ENCODE measurements at regions of chr5 and their contacts with region 1.

Region 1: GRCh38 chr5:160439205-160439600 is 17.5 kb downstream of the PTTG1 start:
- DNase-seq: peak; percentile 94
- H3K4me3 Mint-ChIP-seq: peak overlapping the region; percentile 84
- H3K27ac Mint-ChIP-seq: peak overlapping the region; percentile 94
- H3K4me1 Mint-ChIP-seq: peaks cover 17% of the 10 kb centered on the region
- H3K27me3 Mint-ChIP-seq: peaks cover 2% of the 10 kb centered on the region

Region 2: DNA sequence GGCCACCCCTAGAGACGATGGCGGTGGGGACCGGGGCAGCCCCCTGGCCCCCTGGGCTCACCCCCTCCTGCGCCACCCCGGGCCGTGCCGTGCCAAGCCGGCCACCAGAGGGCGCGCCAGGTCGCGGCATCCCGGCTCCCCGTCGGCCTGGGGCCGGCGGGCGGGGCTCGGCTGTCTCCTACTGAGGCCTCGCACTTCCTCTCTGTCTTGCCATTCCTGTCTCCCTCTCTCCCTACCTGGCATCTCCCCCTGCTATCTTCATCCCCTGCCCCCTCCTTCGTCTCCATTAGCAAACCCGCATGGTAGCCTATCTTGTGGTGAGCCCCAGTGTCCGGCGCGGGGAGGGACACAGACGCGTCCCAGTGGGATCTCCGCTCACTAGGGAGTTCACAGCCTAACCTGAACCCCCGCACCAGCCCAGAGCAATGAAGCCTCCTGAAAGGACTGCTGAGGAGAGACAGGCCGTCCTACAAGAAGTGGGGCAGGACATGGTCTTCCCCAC is 239.7 kb before region 1 on chr5:
- CTCF ChIA-PET with region 1: no interaction called
- intact Hi-C with region 1: no loop called
- DNase-seq: peak; percentile 68
- H3K4me3 Mint-ChIP-seq: peak overlapping the region; percentile 65
- H3K27ac Mint-ChIP-seq: no peak overlapping the region
- H3K4me1 Mint-ChIP-seq: peaks cover 2% of the 10 kb centered on the region
- H3K27me3 Mint-ChIP-seq: peaks cover 9% of the 10 kb centered on the region

Region 3: GRCh38 chr5:160418561-160419457 is 20.4 kb before region 1 on chr5 and contains the start of gene SLU7:
- CTCF ChIA-PET with region 1: interaction called, 61 read pairs
- intact Hi-C with region 1: loop called (anchors 1 kb)
- DNase-seq: peak; percentile 96
- H3K4me3 Mint-ChIP-seq: peak within 1 kb of the TSS; percentile 97
- H3K27ac Mint-ChIP-seq: peak within 1 kb of the TSS; percentile 94
- H3K4me1 Mint-ChIP-seq: peaks cover 43% of the 10 kb centered on the region
- H3K27me3 Mint-ChIP-seq: no peaks in the 10 kb centered on the region
- total RNA-seq, gene SLU7: 33.2 to 34.3 TPM

Region 4: GRCh38 chr5:160458806-160459800 is 19.9 kb after region 1 on chr5:
- CTCF ChIA-PET with region 1: interaction called, 74 read pairs
- intact Hi-C with region 1: loop called (anchors 1 kb)
- DNase-seq: no peak
- H3K4me3 Mint-ChIP-seq: no peak overlapping the region
- H3K27ac Mint-ChIP-seq: no peak overlapping the region
- H3K4me1 Mint-ChIP-seq: peaks cover 20% of the 10 kb centered on the region
- H3K27me3 Mint-ChIP-seq: peaks cover 3% of the 10 kb centered on the region

Region 5: DNA sequence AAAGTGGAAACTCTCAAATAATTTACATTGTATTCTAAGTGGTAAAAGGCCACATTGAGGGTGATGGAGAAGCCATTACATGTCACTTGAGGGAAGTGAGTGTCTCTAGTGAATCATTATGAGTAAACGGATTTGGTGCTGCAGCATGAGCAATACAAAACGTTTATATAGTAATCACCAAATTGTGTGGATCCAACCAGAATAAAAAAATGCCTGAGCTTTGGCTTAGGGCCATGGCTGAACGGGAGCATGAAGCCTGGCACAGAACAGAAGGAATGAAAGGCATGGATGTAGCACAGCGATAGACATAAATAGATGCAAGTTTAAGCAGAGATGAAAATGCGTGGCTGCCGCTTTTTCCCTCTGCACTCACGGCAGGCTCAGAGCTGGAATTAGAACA is 40.7 kb after region 1 on chr5:
- CTCF ChIA-PET with region 1: interaction called, 26 read pairs
- intact Hi-C with region 1: no loop called
- DNase-seq: no peak
- H3K4me3 Mint-ChIP-seq: no peak overlapping the region
- H3K27ac Mint-ChIP-seq: peak overlapping the region; percentile 2
- H3K4me1 Mint-ChIP-seq: peaks cover 34% of the 10 kb centered on the region
- H3K27me3 Mint-ChIP-seq: no peaks in the 10 kb centered on the region

Region 6: DNA sequence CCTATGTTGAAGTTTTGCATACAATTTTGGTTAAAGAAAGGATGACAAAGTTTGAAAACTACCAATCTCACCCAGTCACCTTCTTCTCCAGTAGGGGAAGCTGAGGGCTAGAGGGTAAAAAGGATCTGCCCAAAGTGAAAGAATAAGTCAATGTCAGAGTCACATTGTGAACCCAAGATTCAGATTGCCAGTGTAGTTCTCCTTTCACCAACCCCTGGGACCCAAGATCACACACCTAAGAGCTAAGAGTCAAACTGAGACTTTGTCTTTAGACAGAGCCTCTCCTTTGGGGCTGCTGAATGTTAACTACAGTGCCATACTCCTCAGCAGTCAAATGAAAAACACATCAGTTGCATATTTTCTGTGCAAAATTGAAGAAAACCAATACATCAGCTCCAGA is 202.2 kb after region 1 on chr5:
- CTCF ChIA-PET with region 1: no interaction called
- intact Hi-C with region 1: no loop called
- DNase-seq: no peak
- H3K4me3 Mint-ChIP-seq: no peak overlapping the region
- H3K27ac Mint-ChIP-seq: no peak overlapping the region
- H3K4me1 Mint-ChIP-seq: no peaks in the 10 kb centered on the region
- H3K27me3 Mint-ChIP-seq: no peaks in the 10 kb centered on the region

Region 7: GRCh38 chr5:160657068-160657507 is 217.9 kb after region 1 on chr5:
- CTCF ChIA-PET with region 1: no interaction called
- intact Hi-C with region 1: loop called (anchors 5 kb)
- DNase-seq: no peak
- H3K4me3 Mint-ChIP-seq: no peak overlapping the region
- H3K27ac Mint-ChIP-seq: no peak overlapping the region
- H3K4me1 Mint-ChIP-seq: no peaks in the 10 kb centered on the region
- H3K27me3 Mint-ChIP-seq: peaks cover 15% of the 10 kb centered on the region

Region 8: GRCh38 chr5:160787240-160787639 is 348.0 kb after region 1 on chr5:
- CTCF ChIA-PET with region 1: interaction called, 4 read pairs
- intact Hi-C with region 1: loop called (anchors 1 kb)
- DNase-seq: peak; percentile 17
- H3K4me3 Mint-ChIP-seq: no peak overlapping the region
- H3K27ac Mint-ChIP-seq: no peak overlapping the region
- H3K4me1 Mint-ChIP-seq: no peaks in the 10 kb centered on the region
- H3K27me3 Mint-ChIP-seq: peaks cover 2% of the 10 kb centered on the region

Region 9: DNA sequence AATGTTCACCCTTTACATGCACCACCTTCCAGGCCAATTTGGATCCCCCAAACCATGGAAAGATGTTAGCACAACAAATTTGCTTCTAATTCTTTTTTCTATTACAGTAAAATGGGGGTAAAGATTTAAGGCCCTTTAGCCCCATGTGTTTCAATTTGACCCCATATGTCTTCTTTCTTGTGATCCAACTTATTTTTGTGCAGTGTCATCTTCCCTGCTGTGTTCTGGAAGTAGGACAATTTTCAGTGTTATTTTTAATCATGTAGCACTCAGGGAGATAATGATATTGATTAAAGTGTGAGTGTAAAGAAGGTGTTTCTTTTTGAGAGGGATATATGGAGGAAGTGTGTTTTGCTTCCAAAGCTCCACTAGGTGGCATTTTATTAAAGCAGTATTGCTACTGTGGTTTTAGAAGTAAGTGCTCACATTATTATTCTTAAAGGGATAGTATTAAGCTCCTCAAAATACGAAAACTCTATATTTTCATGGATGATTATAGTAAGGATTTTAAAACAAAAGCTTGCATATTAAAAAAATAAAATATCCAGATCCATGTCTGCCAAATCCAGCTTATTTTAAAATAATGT is 531.5 kb after region 1 on chr5:
- CTCF ChIA-PET with region 1: no interaction called
- intact Hi-C with region 1: loop called (anchors 5 kb)
- DNase-seq: no peak
- H3K4me3 Mint-ChIP-seq: no peak overlapping the region
- H3K27ac Mint-ChIP-seq: no peak overlapping the region
- H3K4me1 Mint-ChIP-seq: no peaks in the 10 kb centered on the region
- H3K27me3 Mint-ChIP-seq: peaks cover 2% of the 10 kb centered on the region